IMR-90 (cell line): ENCODE measurements at regions of chr13 and their contacts with region 1.

Region 1: DNA sequence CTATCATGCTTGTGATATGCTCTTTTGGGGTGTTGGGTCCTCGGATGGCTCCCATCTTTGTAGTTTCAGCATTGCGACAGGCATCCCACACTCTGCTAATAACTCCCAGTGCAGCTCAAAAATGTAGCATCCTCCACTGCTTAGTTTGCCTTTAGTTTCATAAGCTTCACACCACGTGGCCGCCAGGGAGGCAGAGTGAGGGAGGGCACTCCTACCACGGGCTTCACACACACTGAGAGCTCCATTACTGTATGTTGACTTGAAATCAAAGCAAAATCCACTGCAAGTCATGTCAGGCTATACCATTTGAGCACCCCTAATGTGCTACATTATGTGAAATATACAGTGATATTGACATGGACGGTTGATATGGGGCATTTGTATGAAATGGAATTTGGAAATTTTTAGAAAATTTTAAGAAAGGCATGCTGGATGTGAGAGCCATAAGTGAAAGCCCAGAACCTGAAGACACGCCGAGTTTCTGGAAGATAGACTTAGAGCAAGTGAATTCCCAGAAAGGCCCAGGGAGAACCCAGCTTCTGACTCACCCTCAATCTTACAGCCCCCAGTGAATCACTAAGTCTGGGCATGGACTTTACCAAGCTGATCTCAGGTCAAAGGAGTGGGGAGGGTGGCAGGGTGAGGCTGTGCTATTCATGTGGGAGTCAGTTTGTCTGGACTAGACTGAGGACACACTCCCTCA is 94.1 kb downstream of the HSPH1 start:
- DNase-seq: peak; percentile 78
- ATAC-seq: peak; percentile 69
- H3K4me3 ChIP-seq: no peak overlapping the region
- H3K27ac ChIP-seq: no peak overlapping the region
- H3K4me1 ChIP-seq: no peaks in the 10 kb centered on the region; the same call in 1 of the 2 replicates
- H3K27me3 ChIP-seq: no peaks in the 10 kb centered on the region
- CTCF ChIP-seq: no peak
- POLR2A ChIP-seq: no peak
- RAD21 ChIP-seq: no peak

Region 2: GRCh38 chr13:30510811-30511371 is 556.7 kb before region 1 on chr13:
- CTCF ChIA-PET with region 1: no interaction called
- POLR2A ChIA-PET with region 1: no interaction called
- dilution Hi-C with region 1: no loop called
- in situ Hi-C with region 1: no loop called
- intact Hi-C with region 1: no loop called
- DNase-seq: peak; percentile 37
- ATAC-seq: no peak
- H3K4me3 ChIP-seq: no peak overlapping the region
- H3K27ac ChIP-seq: no peak overlapping the region
- H3K4me1 ChIP-seq: no peaks in the 10 kb centered on the region
- H3K27me3 ChIP-seq: no peaks in the 10 kb centered on the region; the same call in none of the 2 replicates
- CTCF ChIP-seq: no peak
- POLR2A ChIP-seq: no peak
- RAD21 ChIP-seq: no peak

Region 3: DNA sequence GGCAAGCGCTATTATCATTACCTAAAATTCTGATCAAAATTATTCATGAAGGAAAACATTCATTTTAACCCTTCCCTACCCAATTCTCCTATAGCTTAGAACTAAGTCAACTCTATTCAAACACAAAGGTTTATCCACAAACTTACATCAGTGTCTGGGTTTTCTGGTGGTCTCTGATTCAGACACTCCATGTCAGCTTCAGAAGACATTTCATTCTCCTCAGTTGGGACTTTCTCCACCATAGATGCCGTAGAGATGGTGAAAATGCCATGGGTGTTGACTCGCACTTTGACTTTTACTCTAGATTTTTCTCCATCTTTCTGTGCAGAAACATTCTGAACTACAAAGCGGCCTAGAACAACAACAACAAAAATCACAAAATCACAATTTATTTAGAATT is 77.8 kb after region 1 on chr13:
- CTCF ChIA-PET with region 1: no interaction called
- POLR2A ChIA-PET with region 1: no interaction called
- dilution Hi-C with region 1: no loop called
- in situ Hi-C with region 1: no loop called
- intact Hi-C with region 1: loop called (anchors 5 kb)
- DNase-seq: no peak
- ATAC-seq: no peak
- H3K4me3 ChIP-seq: no peak overlapping the region
- H3K27ac ChIP-seq: no peak overlapping the region
- H3K4me1 ChIP-seq: no peaks in the 10 kb centered on the region
- H3K27me3 ChIP-seq: no peaks in the 10 kb centered on the region
- CTCF ChIP-seq: no peak
- POLR2A ChIP-seq: no peak
- RAD21 ChIP-seq: no peak

Region 4: GRCh38 chr13:31301119-31301518 is 233.6 kb after region 1 on chr13:
- CTCF ChIA-PET with region 1: no interaction called
- POLR2A ChIA-PET with region 1: no interaction called
- dilution Hi-C with region 1: no loop called
- in situ Hi-C with region 1: no loop called
- intact Hi-C with region 1: no loop called
- DNase-seq: no peak
- ATAC-seq: no peak
- H3K4me3 ChIP-seq: no peak overlapping the region
- H3K27ac ChIP-seq: no peak overlapping the region
- H3K4me1 ChIP-seq: no peaks in the 10 kb centered on the region
- H3K27me3 ChIP-seq: no peaks in the 10 kb centered on the region
- CTCF ChIP-seq: no peak
- POLR2A ChIP-seq: no peak
- RAD21 ChIP-seq: no peak